ENCODE measurements at regions of chr4 and their contacts with region 1.

Region 1: GRCh38 chr4:76585897-76586360 is 150.9 kb downstream of the SHROOM3 start:
- DNase-seq: peak; percentile 80 to 91
- ATAC-seq: peak; percentile 79
- H3K4me3 ChIP-seq: peak overlapping the region; percentile 76 to 81
- H3K27ac ChIP-seq: peak overlapping the region; percentile 92 to 95
- H3K4me1 ChIP-seq: peaks cover 0 to 6% of the 10 kb centered on the region in 2 donors
- H3K27me3 ChIP-seq: no peaks in the 10 kb centered on the region

Region 2: DNA sequence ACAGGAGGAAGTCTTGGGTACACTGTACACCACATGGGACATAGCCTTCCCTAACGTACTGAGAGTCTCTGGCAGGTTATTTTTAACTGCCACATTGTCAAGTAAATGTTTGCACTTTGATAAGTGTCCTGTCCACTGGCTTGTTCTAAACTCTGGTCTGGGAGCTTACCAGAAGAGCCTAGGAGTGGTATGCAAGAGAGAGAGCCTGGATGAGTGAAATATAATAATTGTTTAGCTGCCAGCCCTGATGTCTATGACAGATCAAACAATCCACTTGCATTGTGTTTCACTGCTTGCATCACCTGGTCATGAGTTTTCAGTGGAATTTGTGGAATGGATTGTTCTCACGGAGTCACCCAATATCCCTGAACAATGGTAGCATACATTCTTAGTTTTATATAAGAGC is 59.3 kb before region 1 on chr4:
- intact Hi-C with region 1: loop called in 1 of 2 experiments (anchors 5 kb)
- DNase-seq: no peak
- ATAC-seq: peak; percentile 77
- H3K4me3 ChIP-seq: no peak overlapping the region
- H3K27ac ChIP-seq: peak overlapping the region in 1 of 2 donors; percentile 61
- H3K4me1 ChIP-seq: no peaks in the 10 kb centered on the region
- H3K27me3 ChIP-seq: no peaks in the 10 kb centered on the region

Region 3: GRCh38 chr4:76658231-76659102 is 72.5 kb after region 1 on chr4:
- intact Hi-C with region 1: loop called in 1 of 2 experiments (anchors 5 kb)
- DNase-seq: no peak
- ATAC-seq: no peak
- H3K4me3 ChIP-seq: no peak overlapping the region
- H3K27ac ChIP-seq: peak overlapping the region; percentile 85 to 97
- H3K4me1 ChIP-seq: peaks cover 18 to 21% of the 10 kb centered on the region in 2 donors
- H3K27me3 ChIP-seq: no peaks in the 10 kb centered on the region

Region 4: GRCh38 chr4:76689241-76689817 is 103.4 kb after region 1 on chr4:
- intact Hi-C with region 1: no loop called
- DNase-seq: peak; percentile 65 to 88
- ATAC-seq: peak; percentile 73
- H3K4me3 ChIP-seq: peak overlapping the region; percentile 65 to 93
- H3K27ac ChIP-seq: peak overlapping the region; percentile 77 to 97
- H3K4me1 ChIP-seq: peaks cover 0 to 9% of the 10 kb centered on the region in 2 donors
- H3K27me3 ChIP-seq: no peaks in the 10 kb centered on the region

Region 5: GRCh38 chr4:76748649-76749048 is 162.7 kb after region 1 on chr4:
- intact Hi-C with region 1: loop called in 1 of 2 experiments (anchors 10 kb)
- DNase-seq: no peak
- ATAC-seq: no peak
- H3K4me3 ChIP-seq: no peak overlapping the region
- H3K27ac ChIP-seq: peak overlapping the region in 1 of 2 donors; percentile 21
- H3K4me1 ChIP-seq: peaks cover 0 to 4% of the 10 kb centered on the region in 2 donors
- H3K27me3 ChIP-seq: no peaks in the 10 kb centered on the region

Region 6: GRCh38 chr4:77007358-77008191 is 421.6 kb after region 1 on chr4:
- intact Hi-C with region 1: no loop called
- DNase-seq: peak in 1 of 2 donors; percentile 67
- ATAC-seq: peak; percentile 75
- H3K4me3 ChIP-seq: no peak overlapping the region
- H3K27ac ChIP-seq: peak overlapping the region in 1 of 2 donors; percentile 74
- H3K4me1 ChIP-seq: peaks cover 9 to 12% of the 10 kb centered on the region in 2 donors
- H3K27me3 ChIP-seq: no peaks in the 10 kb centered on the region

Measured in aorta (tissue), 5 donors.